HEK293 (cell line): ENCODE measurements at regions of chr1 and their contacts with region 1.

Region 1: DNA sequence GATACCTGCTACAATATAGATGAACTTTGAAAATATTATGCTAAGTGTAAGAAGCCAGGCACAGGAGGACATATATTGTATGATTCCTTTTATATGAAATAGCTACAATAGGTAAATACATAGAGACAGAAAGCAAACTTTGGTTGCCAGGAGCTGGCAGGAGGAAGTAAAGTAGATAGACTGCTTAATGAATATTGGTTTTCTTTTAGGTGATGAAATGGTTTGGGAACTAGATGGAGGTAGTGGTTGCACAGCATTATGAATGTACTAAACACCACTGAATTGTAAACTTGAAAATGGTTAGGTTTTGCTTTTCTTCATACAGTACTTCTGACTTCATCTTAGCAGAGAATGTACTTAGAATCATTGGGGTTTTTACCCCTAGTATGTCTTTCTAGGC is 21.5 kb downstream of the ABCB10 start:
- H3K4me3 ChIP-seq: no peak overlapping the region
- H3K27ac ChIP-seq: no peak overlapping the region
- H3K4me1 ChIP-seq: no peaks in the 10 kb centered on the region
- CTCF ChIP-seq: no peak

Region 2: GRCh38 chr1:229158341-229158921 is 378.6 kb before region 1 on chr1:
- CTCF ChIA-PET with region 1: no interaction called
- POLR2A ChIA-PET with region 1: no interaction called
- H3K4me3 ChIP-seq: no peak overlapping the region
- H3K27ac ChIP-seq: no peak overlapping the region
- H3K4me1 ChIP-seq: no peaks in the 10 kb centered on the region; the same call in 1 of the 2 replicates
- CTCF ChIP-seq: no peak

Region 3: GRCh38 chr1:229579059-229579673 is 42.2 kb after region 1 on chr1:
- CTCF ChIA-PET with region 1: no interaction called
- POLR2A ChIA-PET with region 1: no interaction called
- H3K4me3 ChIP-seq: no peak overlapping the region
- H3K27ac ChIP-seq: peak overlapping the region; percentile 48; the same call in 1 of the 2 replicates
- H3K4me1 ChIP-seq: peaks cover 9% of the 10 kb centered on the region
- CTCF ChIP-seq: no peak

Region 4: GRCh38 chr1:229596925-229597699 is 60.1 kb after region 1 on chr1:
- CTCF ChIA-PET with region 1: interaction called, 10 read pairs
- POLR2A ChIA-PET with region 1: no interaction called
- H3K4me3 ChIP-seq: no peak overlapping the region
- H3K27ac ChIP-seq: no peak overlapping the region
- H3K4me1 ChIP-seq: no peaks in the 10 kb centered on the region
- CTCF ChIP-seq: no peak